ENCODE measurements at regions of chr2 and their contacts with region 1.

Region 1: GRCh38 chr2:236512902-236513435 is 56.7 kb upstream of the ACKR3 start:
- DNase-seq: peak in 2 of 3 donors; percentile 72 to 79
- ATAC-seq: peak; percentile 84
- H3K4me3 ChIP-seq: no peak overlapping the region
- H3K4me1 ChIP-seq: no peaks in the 10 kb centered on the region
- CTCF ChIP-seq: peak; percentile 73

Region 2: GRCh38 chr2:237026981-237027711 is 514.2 kb after region 1 on chr2:
- intact Hi-C with region 1: loop called (anchors 5 to 10 kb)
- DNase-seq: peak in 2 of 3 donors; percentile 80 to 82
- ATAC-seq: peak; percentile 71
- H3K4me3 ChIP-seq: no peak overlapping the region
- H3K4me1 ChIP-seq: no peaks in the 10 kb centered on the region
- CTCF ChIP-seq: peak; percentile 55